GM18951 (cell line): ENCODE measurements at regions of chr6 and their contacts with region 1.

Region 1: DNA sequence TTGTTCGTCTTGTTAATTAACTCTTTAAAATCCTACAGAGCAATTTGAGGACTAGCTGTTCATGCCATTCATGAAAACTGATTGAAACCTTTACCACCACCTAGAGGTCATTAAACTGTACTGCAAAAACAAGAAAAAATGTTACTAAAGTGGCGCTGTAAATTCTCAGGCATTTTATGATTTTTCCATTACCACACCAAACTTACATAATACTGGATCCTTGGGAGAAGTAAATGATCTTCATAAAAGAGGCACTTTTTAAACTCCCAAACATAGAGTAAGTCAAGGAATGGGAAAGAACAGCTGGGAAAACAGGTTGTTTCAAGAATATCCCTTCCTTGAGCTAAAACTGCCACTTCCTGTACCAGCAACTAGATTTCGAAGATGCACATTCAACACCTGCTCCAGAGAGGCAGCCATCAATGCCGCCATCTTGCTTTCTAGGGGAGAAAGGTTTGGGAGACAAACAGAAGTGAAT is 54.3 kb downstream of the MYLIP start:
- POLR2A ChIP-seq: no peak

Region 2: GRCh38 chr6:15504581-15505350 is 678.5 kb before region 1 on chr6:
- in situ Hi-C with region 1: loop called (anchors 25 kb)
- POLR2A ChIP-seq: no peak

Region 3: GRCh38 chr6:15691250-15691869 is 491.9 kb before region 1 on chr6:
- in situ Hi-C with region 1: loop called (anchors 10 kb)
- POLR2A ChIP-seq: no peak

Region 4: DNA sequence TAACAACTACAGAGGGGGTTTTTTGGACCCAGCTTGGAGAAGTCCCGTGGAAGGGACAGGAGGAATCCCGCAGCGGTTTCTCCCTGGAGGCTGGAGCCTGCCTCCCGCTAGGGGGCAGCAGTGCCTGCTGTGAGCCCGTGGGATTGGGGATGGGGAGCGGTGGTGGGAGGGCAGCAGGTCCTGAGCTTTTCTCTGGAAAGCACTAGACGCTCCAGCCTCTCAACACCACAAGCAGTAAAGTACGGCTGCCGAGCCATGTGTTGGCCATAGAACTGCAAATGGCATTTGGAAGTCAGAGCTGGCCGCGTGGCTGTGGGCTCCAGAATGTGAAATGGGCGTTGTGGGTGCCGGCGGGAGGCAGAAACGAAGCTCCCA is 102.9 kb after region 1 on chr6:
- in situ Hi-C with region 1: no loop called
- POLR2A ChIP-seq: no peak